CD8-positive, alpha-beta T cell (primary cell): ENCODE measurements at regions of chr20 and their contacts with region 1.

Region 1: GRCh38 chr20:46132705-46133120 is 14.6 kb downstream of the CD40 start:
- DNase-seq: peak in 8 of 9 experiments; percentile 35 to 72 (median 61)
- ATAC-seq: peak; percentile 73
- H3K4me3 ChIP-seq: no peak overlapping the region
- H3K4me3 Mint-ChIP-seq: no peak overlapping the region
- H3K27ac ChIP-seq: no peak overlapping the region
- H3K27ac Mint-ChIP-seq: no peak overlapping the region
- H3K4me1 ChIP-seq: no peaks in the 10 kb centered on the region
- H3K4me1 Mint-ChIP-seq: no peaks in the 10 kb centered on the region
- H3K27me3 ChIP-seq: no peaks in the 10 kb centered on the region
- H3K27me3 Mint-ChIP-seq: peaks cover 50% of the 10 kb centered on the region
- CTCF ChIP-seq: peak; percentile 67

Region 2: DNA sequence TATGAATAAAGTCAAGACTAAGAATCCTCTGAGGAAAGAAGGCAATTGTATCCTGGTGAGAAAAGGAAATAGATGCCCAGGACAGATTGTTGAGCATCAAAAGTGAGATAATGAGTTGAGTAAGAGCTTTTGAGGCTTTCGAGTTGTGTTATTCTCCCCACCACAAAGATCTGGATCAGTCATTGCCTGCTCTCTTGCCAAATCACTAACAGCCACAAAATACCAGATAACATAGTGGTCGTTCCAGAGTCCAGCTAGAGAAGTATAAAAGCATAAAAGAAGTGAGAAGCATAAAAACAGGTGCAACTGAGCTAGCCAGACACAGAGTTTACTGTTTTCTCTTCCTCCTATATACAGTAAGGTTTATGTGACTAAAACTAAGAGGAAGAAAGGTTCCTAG is 405.7 kb before region 1 on chr20:
- CTCF ChIA-PET with region 1: no interaction called
- POLR2A ChIA-PET with region 1: no interaction called
- intact Hi-C with region 1: no loop called
- DNase-seq: no peak
- ATAC-seq: no peak
- H3K4me3 ChIP-seq: no peak overlapping the region
- H3K4me3 Mint-ChIP-seq: no peak overlapping the region
- H3K27ac ChIP-seq: no peak overlapping the region
- H3K27ac Mint-ChIP-seq: no peak overlapping the region
- H3K4me1 ChIP-seq: no peaks in the 10 kb centered on the region
- H3K4me1 Mint-ChIP-seq: no peaks in the 10 kb centered on the region
- H3K27me3 ChIP-seq: peaks cover 0 to 2% of the 10 kb centered on the region in 2 experiments
- H3K27me3 Mint-ChIP-seq: peaks cover 22% of the 10 kb centered on the region
- CTCF ChIP-seq: no peak

Region 3: GRCh38 chr20:45877781-45878761 is 254.6 kb before region 1 on chr20:
- CTCF ChIA-PET with region 1: no interaction called
- POLR2A ChIA-PET with region 1: no interaction called
- intact Hi-C with region 1: no loop called
- DNase-seq: no peak
- ATAC-seq: no peak
- H3K4me3 ChIP-seq: no peak overlapping the region
- H3K4me3 Mint-ChIP-seq: no peak overlapping the region
- H3K27ac ChIP-seq: no peak overlapping the region
- H3K27ac Mint-ChIP-seq: no peak overlapping the region
- H3K4me1 ChIP-seq: peaks cover 13% of the 10 kb centered on the region
- H3K4me1 Mint-ChIP-seq: peaks cover 24% of the 10 kb centered on the region
- H3K27me3 ChIP-seq: no peaks in the 10 kb centered on the region
- H3K27me3 Mint-ChIP-seq: no peaks in the 10 kb centered on the region
- CTCF ChIP-seq: no peak

Region 4: DNA sequence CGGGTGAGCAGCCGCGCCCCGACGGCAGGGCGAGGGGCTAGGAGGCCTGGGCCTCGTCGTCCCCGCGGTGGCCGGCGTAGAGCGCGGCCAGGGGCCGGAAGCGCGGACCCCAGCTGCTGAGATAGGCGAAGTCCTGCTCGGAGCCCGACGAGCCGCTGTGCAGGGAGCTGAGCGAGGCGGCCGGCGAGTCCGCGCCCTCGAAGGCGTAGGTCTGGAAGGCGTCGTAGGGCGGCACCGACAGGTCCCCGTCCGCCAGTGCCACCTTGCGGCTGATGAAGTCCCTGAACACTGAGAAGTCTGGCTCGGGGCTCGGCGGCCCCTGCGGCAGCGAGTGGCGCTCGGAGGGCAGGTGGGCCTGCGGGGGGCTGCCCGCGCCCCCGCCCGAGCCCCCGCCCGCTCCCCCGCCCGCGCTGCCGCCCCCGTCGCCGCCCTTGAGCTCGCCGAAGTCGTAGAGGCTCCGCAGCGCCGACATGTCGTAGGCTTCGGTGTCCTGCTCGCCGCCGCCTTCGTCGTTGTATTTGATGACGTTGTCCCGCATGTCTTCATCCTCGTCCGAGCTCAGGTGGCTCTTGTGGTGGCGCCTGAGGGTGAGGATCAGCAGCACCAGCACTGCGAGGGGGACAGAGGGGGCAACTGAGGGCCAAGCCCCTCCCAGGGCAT is 41.9 kb after region 1 on chr20:
- CTCF ChIA-PET with region 1: interaction called, 21 read pairs
- POLR2A ChIA-PET with region 1: no interaction called
- intact Hi-C with region 1: loop called in 1 of 2 experiments (anchors 2 kb)
- DNase-seq: peak; percentile 42 to 78 (median 72)
- ATAC-seq: peak; percentile 91
- H3K4me3 ChIP-seq: no peak overlapping the region
- H3K4me3 Mint-ChIP-seq: no peak overlapping the region
- H3K27ac ChIP-seq: no peak overlapping the region
- H3K27ac Mint-ChIP-seq: no peak overlapping the region
- H3K4me1 ChIP-seq: no peaks in the 10 kb centered on the region
- H3K4me1 Mint-ChIP-seq: peaks cover 4% of the 10 kb centered on the region
- H3K27me3 ChIP-seq: peaks cover 7 to 16% of the 10 kb centered on the region in 2 experiments
- H3K27me3 Mint-ChIP-seq: peaks cover 64% of the 10 kb centered on the region
- CTCF ChIP-seq: peak; percentile 57

Region 5: DNA sequence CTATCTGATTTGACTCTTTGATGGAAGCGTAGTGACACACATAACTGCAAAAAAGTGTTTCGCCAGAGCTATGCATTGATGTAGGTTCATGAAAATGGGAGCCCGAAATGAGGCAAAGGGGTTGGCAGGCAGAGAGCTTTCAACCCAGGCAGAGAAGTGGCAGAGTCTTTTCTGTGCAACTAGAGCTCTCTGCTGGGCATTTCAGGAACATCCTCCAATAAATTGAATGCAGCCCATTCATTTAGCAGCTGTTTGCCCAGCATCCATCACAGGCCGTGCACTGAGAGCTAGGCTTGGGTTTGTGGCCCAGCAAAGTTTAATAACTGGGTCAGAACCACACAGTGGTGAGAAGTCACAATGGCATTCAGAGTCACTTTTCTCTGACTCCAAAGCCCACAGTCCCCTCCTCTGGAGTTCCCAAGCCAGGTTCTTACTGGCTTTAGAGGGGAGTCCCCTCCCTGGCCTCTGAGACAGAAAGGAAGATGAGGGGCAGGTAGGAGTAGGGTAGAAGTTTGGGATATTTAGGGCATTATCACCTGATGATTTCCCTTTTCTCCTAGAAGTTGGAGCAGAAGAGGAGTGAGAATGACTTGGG is 305.5 kb after region 1 on chr20:
- CTCF ChIA-PET with region 1: interaction called, 3 read pairs
- POLR2A ChIA-PET with region 1: no interaction called
- intact Hi-C with region 1: loop called in 1 of 2 experiments (anchors 1 kb)
- DNase-seq: peak in 3 of 9 experiments; percentile 11 to 49 (median 46)
- ATAC-seq: peak; percentile 61
- H3K4me3 ChIP-seq: no peak overlapping the region
- H3K4me3 Mint-ChIP-seq: no peak overlapping the region
- H3K27ac ChIP-seq: no peak overlapping the region
- H3K27ac Mint-ChIP-seq: no peak overlapping the region
- H3K4me1 ChIP-seq: no peaks in the 10 kb centered on the region
- H3K4me1 Mint-ChIP-seq: no peaks in the 10 kb centered on the region
- H3K27me3 ChIP-seq: no peaks in the 10 kb centered on the region
- H3K27me3 Mint-ChIP-seq: peaks cover 48% of the 10 kb centered on the region
- CTCF ChIP-seq: no peak